Activated CD4-positive, alpha-beta memory T cell treated with anti-CD3 and anti-CD28 coated beads for 36 hours (primary cell): ENCODE measurements at regions of chr17 and their contacts with region 1.

Region 1: GRCh38 chr17:76737082-76737675 is at the start of gene SRSF2:
- DNase-seq: peak; percentile 99
- H3K4me3 Mint-ChIP-seq: peak within 1 kb of the TSS; percentile 95
- H3K27ac Mint-ChIP-seq: peak within 1 kb of the TSS; percentile 100
- H3K4me1 Mint-ChIP-seq: peaks cover 46% of the 10 kb centered on the region
- H3K27me3 Mint-ChIP-seq: no peaks in the 10 kb centered on the region
- total RNA-seq, gene SRSF2: 299 TPM

Region 2: GRCh38 chr17:76635659-76636360 is 101.4 kb before region 1 on chr17:
- CTCF ChIA-PET with region 1: no interaction called
- POLR2A ChIA-PET with region 1: no interaction called
- intact Hi-C with region 1: no loop called
- DNase-seq: no peak
- H3K4me3 Mint-ChIP-seq: no peak overlapping the region
- H3K27ac Mint-ChIP-seq: no peak overlapping the region
- H3K4me1 Mint-ChIP-seq: no peaks in the 10 kb centered on the region
- H3K27me3 Mint-ChIP-seq: no peaks in the 10 kb centered on the region

Region 3: DNA sequence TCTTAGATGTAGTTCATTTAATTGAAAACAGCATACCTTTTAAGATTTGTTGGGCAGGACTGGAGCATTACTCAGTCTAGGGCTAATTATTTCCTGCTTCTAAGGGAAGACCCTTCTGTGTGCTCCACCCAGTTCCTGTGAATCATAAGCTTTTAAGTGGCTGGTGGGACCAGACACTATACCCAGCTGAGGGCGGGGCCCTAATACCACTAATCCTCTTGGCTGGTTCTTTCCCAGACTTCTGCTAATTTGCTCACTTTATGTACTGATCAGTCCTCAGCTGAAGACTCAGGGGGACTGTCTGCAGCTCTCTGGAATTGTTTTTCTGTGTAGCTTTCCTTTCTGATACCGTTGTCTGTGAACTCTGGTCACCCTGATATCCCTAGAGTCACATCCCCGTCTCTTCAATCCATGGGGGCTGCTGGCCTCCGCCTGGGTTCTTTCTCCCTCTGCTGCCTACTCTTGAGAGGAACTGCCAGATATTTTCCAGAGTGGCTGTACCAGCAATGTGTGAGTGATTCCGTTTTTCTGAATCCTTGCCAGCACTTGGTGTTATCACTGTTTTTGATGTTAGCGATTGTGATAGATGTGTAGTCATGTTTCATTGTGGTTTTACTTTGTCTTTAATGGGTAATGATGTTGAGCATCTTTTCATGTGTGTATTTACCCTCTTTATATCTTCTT is 35.8 kb after region 1 on chr17:
- CTCF ChIA-PET with region 1: interaction called, 5 read pairs
- POLR2A ChIA-PET with region 1: interaction called, 6 read pairs
- intact Hi-C with region 1: loop called (anchors 1 kb)
- DNase-seq: peak; percentile 71
- H3K4me3 Mint-ChIP-seq: peak overlapping the region; percentile 67
- H3K27ac Mint-ChIP-seq: peak overlapping the region; percentile 92
- H3K4me1 Mint-ChIP-seq: peaks cover 23% of the 10 kb centered on the region
- H3K27me3 Mint-ChIP-seq: no peaks in the 10 kb centered on the region